ENCODE measurements at regions of chr15 and their contacts with region 1.

Region 1: GRCh38 chr15:84600851-84601838 is at the start of gene ZSCAN2:
- DNase-seq: peak; percentile 97
- ATAC-seq: peak; percentile 98
- total RNA-seq, gene ZSCAN2: 5.7 TPM

Region 2: DNA sequence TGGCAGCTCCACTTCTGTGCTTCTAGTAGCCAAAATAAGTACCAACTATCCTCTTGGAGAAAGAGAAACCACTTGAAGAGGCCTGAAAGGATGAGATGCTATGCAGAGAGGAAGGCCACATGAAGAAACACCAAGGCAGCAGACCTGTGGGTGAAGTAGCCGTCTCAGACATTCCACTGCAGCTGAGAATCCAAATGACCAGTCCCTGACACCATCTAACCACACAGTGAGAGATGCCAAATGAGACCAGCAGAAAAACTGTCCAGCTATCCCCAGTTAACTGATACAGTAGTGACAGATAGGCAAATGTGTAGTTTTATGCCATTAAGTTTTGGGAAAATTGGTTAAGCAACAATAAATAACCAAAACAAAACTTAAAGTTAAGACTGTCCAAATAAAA is 48.2 kb before region 1 on chr15:
- intact Hi-C with region 1: no loop called
- DNase-seq: no peak
- ATAC-seq: no peak

Region 3: GRCh38 chr15:84633311-84634227 is 32.4 kb after region 1 on chr15:
- intact Hi-C with region 1: loop called (anchors 1 kb)
- DNase-seq: peak; percentile 91
- ATAC-seq: peak; percentile 79

Region 4: GRCh38 chr15:85044251-85044853 is 443.2 kb after region 1 on chr15:
- intact Hi-C with region 1: loop called (anchors 10 kb)
- DNase-seq: no peak
- ATAC-seq: peak; percentile 67

Measured in Right ventricle myocardium inferior (tissue), 1 donor.